ENCODE measurements at regions of chr4 and their contacts with region 1.

Region 1: GRCh38 chr4:72295966-72296557 is 264.3 kb downstream of the NPFFR2 start:
- DNase-seq: peak; percentile 56
- H3K4me3 ChIP-seq: no peak overlapping the region
- H3K27ac ChIP-seq: no peak overlapping the region
- H3K4me1 ChIP-seq: no peaks in the 10 kb centered on the region
- H3K27me3 ChIP-seq: no peaks in the 10 kb centered on the region
- CTCF ChIP-seq: peak; percentile 34 to 44
- POLR2A ChIP-seq: no peak

Region 2: GRCh38 chr4:72136429-72136828 is 159.6 kb before region 1 on chr4:
- CTCF ChIA-PET with region 1: no interaction called
- POLR2A ChIA-PET with region 1: no interaction called
- dilution Hi-C with region 1: no loop called
- intact Hi-C with region 1: no loop called
- DNase-seq: no peak
- H3K4me3 ChIP-seq: no peak overlapping the region
- H3K27ac ChIP-seq: no peak overlapping the region
- H3K4me1 ChIP-seq: no peaks in the 10 kb centered on the region
- H3K27me3 ChIP-seq: no peaks in the 10 kb centered on the region
- CTCF ChIP-seq: no peak
- POLR2A ChIP-seq: no peak

Region 3: GRCh38 chr4:72468904-72469502 is 172.9 kb after region 1 on chr4:
- CTCF ChIA-PET with region 1: interaction called, 19 read pairs
- POLR2A ChIA-PET with region 1: no interaction called
- dilution Hi-C with region 1: no loop called
- intact Hi-C with region 1: loop called (anchors 1 kb)
- DNase-seq: peak; percentile 46
- H3K4me3 ChIP-seq: no peak overlapping the region
- H3K27ac ChIP-seq: no peak overlapping the region
- H3K4me1 ChIP-seq: peaks cover 3% of the 10 kb centered on the region
- H3K27me3 ChIP-seq: no peaks in the 10 kb centered on the region
- CTCF ChIP-seq: peak in 1 of 2 donors; percentile 23
- POLR2A ChIP-seq: no peak

Region 4: DNA sequence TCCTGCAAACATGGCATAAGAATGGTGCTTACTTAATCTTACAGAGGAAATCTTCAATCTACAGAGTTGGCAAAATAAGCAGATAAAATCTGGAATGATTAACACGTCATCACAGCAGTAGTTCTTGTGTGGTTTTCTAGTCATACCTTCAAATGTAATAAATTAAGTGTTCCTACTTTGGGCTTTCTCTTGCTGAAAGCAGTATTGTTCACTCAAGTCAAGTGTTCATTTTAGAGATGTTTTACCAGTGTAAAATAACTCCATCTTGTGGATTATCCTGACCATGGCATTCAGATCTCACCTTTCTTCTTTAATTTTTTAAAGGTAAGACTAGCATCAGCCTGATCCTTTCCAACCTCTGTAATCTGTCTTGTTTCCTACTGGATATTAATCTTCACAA is 200.1 kb after region 1 on chr4:
- CTCF ChIA-PET with region 1: interaction called, 25 read pairs
- POLR2A ChIA-PET with region 1: no interaction called
- dilution Hi-C with region 1: no loop called
- intact Hi-C with region 1: no loop called
- DNase-seq: no peak
- H3K4me3 ChIP-seq: no peak overlapping the region
- H3K27ac ChIP-seq: no peak overlapping the region
- H3K4me1 ChIP-seq: no peaks in the 10 kb centered on the region
- H3K27me3 ChIP-seq: no peaks in the 10 kb centered on the region
- CTCF ChIP-seq: no peak
- POLR2A ChIP-seq: no peak

Region 5: GRCh38 chr4:72701987-72702819 is 406.1 kb after region 1 on chr4:
- CTCF ChIA-PET with region 1: interaction called, 3 read pairs
- POLR2A ChIA-PET with region 1: no interaction called
- dilution Hi-C with region 1: no loop called
- intact Hi-C with region 1: loop called (anchors 5 kb)
- DNase-seq: peak; percentile 69
- H3K4me3 ChIP-seq: peak overlapping the region; percentile 30 to 85 (median 73)
- H3K27ac ChIP-seq: peak overlapping the region; percentile 1
- H3K4me1 ChIP-seq: no peaks in the 10 kb centered on the region
- H3K27me3 ChIP-seq: no peaks in the 10 kb centered on the region
- CTCF ChIP-seq: peak; percentile 30 to 47
- POLR2A ChIP-seq: no peak

Region 6: DNA sequence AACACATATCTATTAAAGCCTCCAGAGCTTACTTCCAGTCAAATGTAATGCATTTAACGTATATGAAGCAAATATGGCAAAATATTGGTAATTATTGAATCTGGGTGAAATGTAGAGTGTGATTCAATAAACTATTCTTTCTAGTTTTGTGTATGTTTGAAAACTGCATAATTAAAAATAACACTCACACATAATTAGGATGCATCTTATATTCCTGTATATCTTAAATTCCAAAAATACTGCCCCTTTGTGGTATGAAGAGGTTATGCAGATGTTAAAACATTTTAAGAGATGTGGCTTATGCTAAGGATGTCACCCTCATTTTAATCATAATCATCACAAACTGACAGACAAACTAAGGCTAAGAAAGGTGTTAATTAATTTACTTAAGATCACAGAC is 590.5 kb after region 1 on chr4:
- CTCF ChIA-PET with region 1: interaction called, 10 read pairs
- POLR2A ChIA-PET with region 1: no interaction called
- dilution Hi-C with region 1: no loop called
- intact Hi-C with region 1: loop called (anchors 5 kb)
- DNase-seq: peak; percentile 21
- H3K4me3 ChIP-seq: no peak overlapping the region
- H3K27ac ChIP-seq: no peak overlapping the region
- H3K4me1 ChIP-seq: no peaks in the 10 kb centered on the region
- H3K27me3 ChIP-seq: no peaks in the 10 kb centered on the region
- CTCF ChIP-seq: peak; percentile 4 to 25
- POLR2A ChIP-seq: no peak